ENCODE measurements at regions of chr11 and their contacts with region 1.

Region 1: GRCh38 chr11:68933605-68934320 is 30.1 kb downstream of the IGHMBP2 start:
- DNase-seq: no peak
- H3K4me3 ChIP-seq: no peak overlapping the region
- H3K27ac ChIP-seq: no peak overlapping the region
- H3K4me1 ChIP-seq: peaks cover 3% of the 10 kb centered on the region
- H3K27me3 ChIP-seq: no peaks in the 10 kb centered on the region
- CTCF ChIP-seq: no peak

Region 2: DNA sequence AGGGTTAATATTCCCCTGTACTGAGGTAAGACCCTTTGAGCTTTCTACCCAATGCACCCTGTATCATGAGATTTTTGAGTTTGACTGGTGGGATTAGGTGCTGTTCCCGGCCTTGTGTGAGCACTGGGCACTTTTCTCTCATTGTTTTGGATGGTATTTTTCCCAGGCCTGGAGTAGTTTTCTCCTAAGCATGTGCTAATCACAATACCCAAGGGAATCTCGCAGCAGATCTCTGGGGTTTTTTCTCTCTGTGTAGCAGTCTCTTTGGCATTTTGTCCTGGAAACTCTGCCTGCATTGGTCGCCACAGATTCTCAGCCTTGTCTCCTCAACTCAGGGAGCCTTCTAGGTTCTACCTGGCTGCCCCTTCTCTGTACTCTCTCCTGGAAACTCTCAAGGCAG is 10.1 kb before region 1 on chr11:
- CTCF ChIA-PET with region 1: no interaction called
- dilution Hi-C with region 1: no loop called
- in situ Hi-C with region 1: no loop called
- intact Hi-C with region 1: no loop called
- DNase-seq: no peak
- H3K4me3 ChIP-seq: no peak overlapping the region
- H3K27ac ChIP-seq: no peak overlapping the region
- H3K4me1 ChIP-seq: no peaks in the 10 kb centered on the region
- H3K27me3 ChIP-seq: no peaks in the 10 kb centered on the region
- CTCF ChIP-seq: no peak

Region 3: DNA sequence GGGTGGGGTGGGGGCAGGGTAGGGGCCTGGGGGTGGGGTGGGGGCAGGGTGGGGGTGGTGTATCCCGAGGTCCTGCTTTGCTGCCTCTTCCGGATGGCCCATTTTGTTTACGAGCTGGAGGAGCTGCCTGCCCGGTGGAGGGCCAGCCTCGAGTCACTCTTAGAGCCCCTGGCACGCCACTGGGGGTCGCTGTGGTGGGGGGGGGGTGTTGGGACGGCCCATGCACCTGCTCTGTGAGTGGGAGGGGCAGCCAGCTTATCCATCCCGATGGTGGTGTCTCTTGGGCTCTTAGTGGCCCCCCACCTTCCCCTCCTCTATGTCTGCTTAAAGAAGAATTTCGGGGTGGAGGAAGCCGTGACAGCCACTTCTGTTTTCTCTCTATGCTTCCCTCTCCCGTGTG is 22.4 kb after region 1 on chr11:
- CTCF ChIA-PET with region 1: no interaction called
- dilution Hi-C with region 1: no loop called
- in situ Hi-C with region 1: no loop called
- intact Hi-C with region 1: no loop called
- DNase-seq: no peak
- H3K4me3 ChIP-seq: no peak overlapping the region
- H3K27ac ChIP-seq: no peak overlapping the region
- H3K4me1 ChIP-seq: no peaks in the 10 kb centered on the region
- H3K27me3 ChIP-seq: no peaks in the 10 kb centered on the region
- CTCF ChIP-seq: peak in 1 of 2 donors; percentile 17

Region 4: DNA sequence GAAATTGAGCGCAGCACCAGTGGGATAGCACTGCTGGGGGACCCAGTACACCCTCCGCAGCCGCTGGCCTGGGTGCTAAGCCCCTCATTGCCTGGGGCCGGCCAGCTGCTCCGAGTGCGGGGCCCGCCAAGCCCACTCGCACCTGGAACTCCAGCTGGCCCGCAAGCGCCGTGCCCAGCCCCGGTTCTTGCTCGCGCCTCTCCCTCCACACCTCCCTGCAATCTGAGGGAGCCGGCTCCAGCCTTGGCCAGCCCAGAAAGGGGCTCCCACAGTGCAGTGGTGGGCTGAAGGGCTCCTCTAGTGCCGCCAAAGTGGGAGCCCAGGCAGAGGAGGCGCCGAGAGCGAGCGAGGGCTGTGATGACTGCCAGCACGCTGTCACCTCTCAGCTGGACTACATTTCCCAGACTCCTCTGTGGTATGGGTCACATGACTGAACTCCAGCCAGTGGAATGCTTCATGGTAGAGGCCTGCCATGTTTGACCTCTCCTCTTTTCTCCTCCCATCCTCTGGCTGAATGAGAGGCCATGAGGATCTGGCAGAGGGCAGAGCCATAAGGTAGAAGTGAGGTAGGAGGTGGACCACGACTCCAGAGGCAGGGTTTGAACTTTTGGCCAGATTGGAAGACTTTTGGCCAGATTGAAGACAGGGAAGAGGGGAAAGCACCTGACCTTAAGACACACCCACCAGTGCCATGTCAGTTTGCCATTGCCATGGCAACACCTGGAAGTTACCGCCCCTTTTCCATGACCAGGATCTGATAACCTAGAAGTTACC is 40.8 kb after region 1 on chr11:
- CTCF ChIA-PET with region 1: no interaction called
- dilution Hi-C with region 1: loop called (anchors 5 kb)
- in situ Hi-C with region 1: no loop called
- intact Hi-C with region 1: no loop called
- DNase-seq: no peak
- H3K4me3 ChIP-seq: no peak overlapping the region
- H3K27ac ChIP-seq: no peak overlapping the region
- H3K4me1 ChIP-seq: no peaks in the 10 kb centered on the region
- H3K27me3 ChIP-seq: no peaks in the 10 kb centered on the region
- CTCF ChIP-seq: no peak

Measured in mammary epithelial cell (primary cell).